ENCODE measurements at regions of chr18 and their contacts with region 1.

Region 1: DNA sequence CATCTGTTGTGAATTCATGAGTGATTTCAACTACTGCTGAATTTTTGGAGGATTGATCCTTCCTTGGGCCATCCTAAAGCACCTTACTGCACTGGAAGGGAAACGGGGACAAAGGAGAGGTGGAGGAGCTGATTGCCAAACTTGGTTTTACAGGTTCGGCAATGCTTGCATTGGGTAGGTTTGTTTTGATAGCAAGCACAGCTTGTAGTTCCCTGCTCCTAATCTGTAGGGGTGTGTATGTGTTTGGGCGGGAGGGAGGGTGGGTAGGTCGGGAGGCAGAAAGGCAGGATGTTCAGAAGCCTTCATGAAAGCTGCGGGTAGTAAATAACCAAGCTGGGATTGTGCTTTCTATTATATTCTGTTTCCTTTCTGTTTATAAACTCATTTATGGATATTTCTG is 24.6 kb downstream of the PHLPP1 start:
- DNase-seq: no peak
- ATAC-seq: no peak
- H3K4me3 ChIP-seq: no peak overlapping the region
- H3K27ac ChIP-seq: no peak overlapping the region
- H3K4me1 ChIP-seq: peaks cover 0 to 52% (median 14%) of the 10 kb centered on the region in 9 donors
- H3K27me3 ChIP-seq: no peaks in the 10 kb centered on the region
- CTCF ChIP-seq: no peak

Region 2: DNA sequence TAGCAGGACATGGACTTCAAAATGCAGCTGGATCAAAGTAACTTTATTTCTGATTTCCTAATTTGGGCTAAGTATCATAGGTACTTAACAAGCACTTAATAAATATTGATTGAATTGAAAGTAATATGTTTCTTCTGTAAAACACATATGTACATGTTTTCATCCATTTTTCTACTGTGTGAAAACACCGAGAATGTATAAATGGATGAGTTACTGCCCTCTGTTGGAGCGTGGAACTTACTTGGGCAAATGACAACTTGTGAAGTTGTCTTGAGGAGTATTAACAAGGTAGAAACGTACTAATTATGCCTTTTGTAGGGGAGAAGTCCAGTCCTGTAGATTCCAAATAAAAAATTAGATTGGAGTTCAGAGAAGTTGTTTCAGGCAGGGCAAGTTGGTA is 62.6 kb after region 1 on chr18:
- intact Hi-C with region 1: loop called in 1 of 10 experiments (anchors 5 kb)
- DNase-seq: no peak
- ATAC-seq: no peak
- H3K4me3 ChIP-seq: no peak overlapping the region
- H3K27ac ChIP-seq: no peak overlapping the region
- H3K4me1 ChIP-seq: peaks cover 0 to 20% (median 0%) of the 10 kb centered on the region in 9 donors
- H3K27me3 ChIP-seq: no peaks in the 10 kb centered on the region
- CTCF ChIP-seq: peak in 6 of 9 donors; percentile 6 to 41 (median 27)

Region 3: GRCh38 chr18:63040788-63041410 is 301.0 kb after region 1 on chr18:
- intact Hi-C with region 1: no loop called
- DNase-seq: no peak
- ATAC-seq: peak in 2 of 8 donors; percentile 30 to 33
- H3K4me3 ChIP-seq: no peak overlapping the region
- H3K27ac ChIP-seq: no peak overlapping the region
- H3K4me1 ChIP-seq: peaks cover 0 to 9% (median 7%) of the 10 kb centered on the region in 9 donors
- H3K27me3 ChIP-seq: no peaks in the 10 kb centered on the region
- CTCF ChIP-seq: no peak